ENCODE measurements at regions of chr10 and their contacts with region 1.

Region 1: DNA sequence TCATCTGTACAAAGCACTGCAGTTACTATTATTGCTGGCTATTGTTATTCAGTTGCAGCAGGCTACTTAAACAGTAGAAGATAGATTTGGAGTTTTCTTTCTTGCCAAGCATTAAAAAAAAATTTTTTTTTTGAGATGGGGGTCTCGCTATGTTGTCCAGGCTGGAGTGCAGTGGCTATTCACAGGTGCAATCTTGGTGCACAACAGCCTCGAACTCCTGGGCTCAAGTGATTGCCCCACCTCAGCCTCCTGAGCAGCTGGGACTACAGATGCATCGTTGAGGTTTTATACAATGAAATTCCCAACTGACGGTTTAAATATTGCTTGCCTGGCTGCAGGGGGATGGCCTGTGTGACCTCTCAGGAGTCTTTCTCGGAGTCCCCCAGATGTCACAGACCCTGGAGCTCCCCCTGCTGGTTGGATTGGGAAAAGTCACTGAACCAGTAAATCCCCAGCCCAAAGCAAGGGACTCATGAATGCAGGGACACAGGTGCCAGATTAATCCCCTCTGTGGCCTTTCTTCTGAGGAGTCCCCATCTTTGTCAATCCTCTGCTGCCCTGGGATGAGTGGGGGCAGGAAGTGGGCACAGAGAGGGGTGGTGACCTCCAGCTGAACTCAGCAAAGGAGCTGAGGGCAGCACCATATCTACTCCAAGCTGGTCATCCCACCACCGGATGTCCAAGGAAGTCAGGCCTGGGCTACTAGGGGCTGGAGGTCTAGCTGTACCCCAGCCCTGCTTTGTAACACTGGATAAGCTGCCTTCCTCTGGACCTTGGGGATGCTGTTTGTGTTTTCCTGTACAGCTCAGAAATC is 149.6 kb downstream of the C10orf105 start:
- DNase-seq: peak; percentile 42 to 83
- ATAC-seq: peak; percentile 61

Region 2: GRCh38 chr10:71314028-71314693 is 255.8 kb before region 1 on chr10:
- intact Hi-C with region 1: loop called in 1 of 2 experiments (anchors 5 kb)
- DNase-seq: peak in 1 of 2 donors; percentile 54
- ATAC-seq: peak; percentile 38

Region 3: GRCh38 chr10:71389768-71390460 is 180.1 kb before region 1 on chr10:
- intact Hi-C with region 1: loop called (anchors 5 to 10 kb)
- DNase-seq: no peak
- ATAC-seq: no peak

Region 4: GRCh38 chr10:71396084-71396720 is 173.8 kb before region 1 on chr10:
- intact Hi-C with region 1: loop called in 1 of 2 experiments (anchors 10 kb)
- DNase-seq: peak in 1 of 2 donors; percentile 44
- ATAC-seq: peak; percentile 77

Region 5: DNA sequence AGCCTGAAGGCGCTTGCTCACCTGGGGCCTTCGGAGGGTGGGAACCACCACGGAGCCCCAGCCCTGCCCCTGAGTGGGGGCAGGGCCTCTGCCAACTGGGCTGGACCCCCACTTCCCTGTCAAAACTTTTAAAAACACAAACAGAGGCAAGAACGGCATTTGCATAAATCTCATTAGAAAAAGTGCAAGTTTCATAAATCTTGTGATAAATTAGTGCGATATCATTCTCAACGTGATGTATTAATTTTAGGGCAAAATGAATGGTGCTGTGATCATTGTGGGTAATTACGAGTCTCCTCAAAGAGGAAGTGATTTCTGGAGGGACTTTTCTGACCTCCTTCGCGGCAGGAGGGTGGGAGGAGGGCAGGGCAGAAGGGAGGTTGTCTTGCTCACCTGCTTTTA is 75.0 kb before region 1 on chr10:
- intact Hi-C with region 1: no loop called
- DNase-seq: no peak
- ATAC-seq: no peak

Region 6: GRCh38 chr10:71945819-71946474 is 376.0 kb after region 1 on chr10:
- intact Hi-C with region 1: no loop called
- DNase-seq: no peak
- ATAC-seq: no peak

Measured in left colon (tissue), 2 donors.